Activated B cell treated with CpG ODN at 0.5 μM for 24 hours (primary cell): ENCODE measurements at regions of chr3 and their contacts with region 1.

Region 1: GRCh38 chr3:5016218-5017161 is 37.3 kb downstream of the BHLHE40 start:
- DNase-seq: no peak
- ATAC-seq: peak; percentile 18
- H3K4me3 Mint-ChIP-seq: peak overlapping the region; percentile 16
- H3K27ac Mint-ChIP-seq: peak overlapping the region; percentile 66
- H3K4me1 Mint-ChIP-seq: peaks cover 86% of the 10 kb centered on the region
- H3K27me3 Mint-ChIP-seq: no peaks in the 10 kb centered on the region
- CTCF ChIP-seq: no peak

Region 2: GRCh38 chr3:4845882-4846281 is 170.6 kb before region 1 on chr3:
- CTCF ChIA-PET with region 1: no interaction called
- POLR2A ChIA-PET with region 1: interaction called, 12 read pairs
- intact Hi-C with region 1: loop called (anchors 1 kb)
- DNase-seq: no peak
- ATAC-seq: peak; percentile 66
- H3K4me3 Mint-ChIP-seq: peak overlapping the region; percentile 16
- H3K27ac Mint-ChIP-seq: peak overlapping the region; percentile 69
- H3K4me1 Mint-ChIP-seq: peaks cover 72% of the 10 kb centered on the region
- H3K27me3 Mint-ChIP-seq: no peaks in the 10 kb centered on the region
- CTCF ChIP-seq: no peak

Region 3: GRCh38 chr3:5026331-5027218 is 10.1 kb after region 1 on chr3:
- CTCF ChIA-PET with region 1: interaction called, 16 read pairs
- POLR2A ChIA-PET with region 1: interaction called, 64 read pairs
- intact Hi-C with region 1: loop called (anchors 1 kb)
- DNase-seq: peak; percentile 57
- ATAC-seq: peak; percentile 72
- H3K4me3 Mint-ChIP-seq: peak overlapping the region; percentile 84
- H3K27ac Mint-ChIP-seq: peak overlapping the region; percentile 78
- H3K4me1 Mint-ChIP-seq: peaks cover 39% of the 10 kb centered on the region
- H3K27me3 Mint-ChIP-seq: no peaks in the 10 kb centered on the region
- CTCF ChIP-seq: no peak

Region 4: GRCh38 chr3:5187156-5187919 is 170.8 kb after region 1 on chr3 and contains the start of gene EDEM1:
- CTCF ChIA-PET with region 1: no interaction called
- POLR2A ChIA-PET with region 1: interaction called, 5 read pairs
- intact Hi-C with region 1: loop called (anchors 2 kb)
- DNase-seq: peak; percentile 100
- ATAC-seq: peak; percentile 88
- H3K4me3 Mint-ChIP-seq: peak within 1 kb of the TSS; percentile 98
- H3K27ac Mint-ChIP-seq: peak within 1 kb of the TSS; percentile 99
- H3K4me1 Mint-ChIP-seq: peaks cover 73% of the 10 kb centered on the region
- H3K27me3 Mint-ChIP-seq: no peaks in the 10 kb centered on the region
- CTCF ChIP-seq: no peak
- total RNA-seq, gene EDEM1: 171 and 185 TPM in 2 replicates